Activated B cell treated with CpG ODN at 0.5 μM for 24 hours (primary cell): ENCODE measurements at regions of chr1 and their contacts with region 1.

Region 1: DNA sequence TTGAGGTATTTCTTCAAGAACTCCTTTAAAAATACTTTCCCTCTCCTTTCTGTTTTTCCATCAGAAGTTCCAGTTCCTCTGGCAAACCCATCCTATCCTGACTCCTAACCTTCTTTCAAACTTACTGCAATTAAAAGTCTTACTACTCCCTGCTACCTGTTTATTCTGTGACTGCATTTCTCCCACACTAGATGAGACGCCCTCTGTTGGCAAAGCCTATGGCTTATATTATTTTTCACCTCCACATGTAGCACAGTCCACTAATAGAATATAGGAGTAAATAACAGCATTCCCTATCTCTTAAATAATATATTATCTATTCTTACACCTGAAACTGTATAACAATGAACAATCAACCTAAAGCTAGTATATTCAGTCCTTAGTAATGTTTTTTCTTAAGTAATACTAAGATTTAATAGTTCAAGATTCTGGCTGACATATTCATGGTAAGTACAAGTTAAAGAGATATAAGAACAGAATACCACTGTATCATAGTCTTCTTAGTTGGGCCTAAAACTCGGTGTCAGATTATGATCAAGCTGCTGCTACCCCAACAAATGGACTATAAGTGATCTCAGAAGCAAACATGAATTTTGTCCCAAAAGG is 54.8 kb downstream of the RAB3GAP2 start:
- DNase-seq: no peak
- ATAC-seq: no peak
- H3K4me3 Mint-ChIP-seq: no peak overlapping the region
- H3K27ac Mint-ChIP-seq: peak overlapping the region; percentile 0
- H3K4me1 Mint-ChIP-seq: peaks cover 49% of the 10 kb centered on the region
- H3K27me3 Mint-ChIP-seq: no peaks in the 10 kb centered on the region
- CTCF ChIP-seq: no peak

Region 2: GRCh38 chr1:219990782-219991510 is 226.5 kb before region 1 on chr1:
- CTCF ChIA-PET with region 1: no interaction called
- POLR2A ChIA-PET with region 1: interaction called, 12 read pairs
- intact Hi-C with region 1: no loop called
- DNase-seq: no peak
- ATAC-seq: no peak
- H3K4me3 Mint-ChIP-seq: no peak overlapping the region
- H3K27ac Mint-ChIP-seq: peak overlapping the region; percentile 53
- H3K4me1 Mint-ChIP-seq: peaks cover 49% of the 10 kb centered on the region
- H3K27me3 Mint-ChIP-seq: no peaks in the 10 kb centered on the region
- CTCF ChIP-seq: no peak

Region 3: DNA sequence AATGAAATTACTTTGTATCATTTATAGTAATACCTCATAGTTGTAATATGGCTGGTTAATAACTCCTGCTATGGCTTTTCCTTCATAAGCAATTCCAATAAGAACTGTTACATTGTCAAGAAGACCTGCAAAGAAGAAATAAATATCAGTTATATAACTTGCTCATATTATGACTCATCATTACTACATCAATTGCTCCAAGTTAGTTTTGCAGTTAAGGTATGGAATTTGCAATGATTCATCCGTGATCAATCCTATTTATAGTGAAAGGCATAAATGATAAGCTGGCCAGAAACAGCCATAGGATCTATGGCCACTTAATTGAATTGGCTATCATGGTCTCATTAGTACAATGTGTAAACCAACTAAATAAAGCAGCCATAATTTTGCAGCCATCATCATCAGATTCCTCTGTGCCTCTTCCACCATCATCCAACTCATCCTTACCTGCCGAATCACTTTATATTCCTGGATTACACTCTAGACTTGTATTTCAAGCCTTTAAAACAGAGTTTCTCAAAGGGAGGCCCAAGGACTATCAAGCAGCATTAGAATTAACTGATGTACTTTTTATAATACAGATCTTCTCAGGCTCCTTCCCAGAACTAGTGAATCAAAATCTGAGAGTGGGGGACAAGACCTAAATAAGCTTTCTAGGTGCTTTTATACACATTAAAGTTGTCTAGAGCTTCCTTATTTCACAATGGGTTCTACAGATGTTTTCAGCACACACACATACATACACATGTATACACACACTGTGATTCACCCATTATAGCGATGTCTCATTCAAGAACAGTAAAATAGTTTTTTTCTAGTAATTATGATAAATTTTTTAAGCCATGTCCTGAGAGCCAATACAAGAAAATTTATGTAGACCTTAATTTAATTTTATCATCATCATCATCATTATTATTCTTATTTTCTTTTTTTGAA is 149.9 kb before region 1 on chr1:
- CTCF ChIA-PET with region 1: no interaction called
- POLR2A ChIA-PET with region 1: no interaction called
- intact Hi-C with region 1: no loop called
- DNase-seq: no peak
- ATAC-seq: no peak
- H3K4me3 Mint-ChIP-seq: no peak overlapping the region
- H3K27ac Mint-ChIP-seq: no peak overlapping the region
- H3K4me1 Mint-ChIP-seq: no peaks in the 10 kb centered on the region
- H3K27me3 Mint-ChIP-seq: no peaks in the 10 kb centered on the region
- CTCF ChIP-seq: no peak

Region 4: DNA sequence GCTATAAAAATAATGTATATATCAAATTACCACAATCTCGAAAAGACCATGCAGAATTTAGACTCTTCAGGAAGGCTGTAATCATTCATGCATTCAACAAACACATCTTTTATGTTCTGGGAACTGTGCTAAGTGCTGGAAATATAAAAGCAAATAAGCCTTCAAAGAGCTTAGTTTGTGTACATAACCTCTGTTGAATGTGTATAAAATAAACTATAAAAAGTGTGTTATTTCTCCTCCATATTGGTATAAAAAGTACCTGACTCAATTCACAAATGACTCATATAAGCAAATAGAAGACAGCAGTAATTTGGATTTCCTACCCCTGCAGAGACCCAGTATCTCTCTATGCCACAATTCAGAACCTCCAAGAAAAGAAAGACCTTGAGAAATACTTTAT is 18.0 kb after region 1 on chr1:
- CTCF ChIA-PET with region 1: interaction called, 5 read pairs
- POLR2A ChIA-PET with region 1: interaction called, 9 read pairs
- intact Hi-C with region 1: loop called (anchors 2 kb)
- DNase-seq: no peak
- ATAC-seq: no peak
- H3K4me3 Mint-ChIP-seq: no peak overlapping the region
- H3K27ac Mint-ChIP-seq: no peak overlapping the region
- H3K4me1 Mint-ChIP-seq: peaks cover 20% of the 10 kb centered on the region
- H3K27me3 Mint-ChIP-seq: no peaks in the 10 kb centered on the region
- CTCF ChIP-seq: no peak

Region 5: GRCh38 chr1:220294846-220295301 is 77.4 kb after region 1 on chr1:
- CTCF ChIA-PET with region 1: interaction called, 49 read pairs
- POLR2A ChIA-PET with region 1: no interaction called
- intact Hi-C with region 1: loop called (anchors 1 kb)
- DNase-seq: no peak
- ATAC-seq: no peak
- H3K4me3 Mint-ChIP-seq: no peak overlapping the region
- H3K27ac Mint-ChIP-seq: no peak overlapping the region
- H3K4me1 Mint-ChIP-seq: no peaks in the 10 kb centered on the region
- H3K27me3 Mint-ChIP-seq: peaks cover 13% of the 10 kb centered on the region
- CTCF ChIP-seq: no peak

Region 6: DNA sequence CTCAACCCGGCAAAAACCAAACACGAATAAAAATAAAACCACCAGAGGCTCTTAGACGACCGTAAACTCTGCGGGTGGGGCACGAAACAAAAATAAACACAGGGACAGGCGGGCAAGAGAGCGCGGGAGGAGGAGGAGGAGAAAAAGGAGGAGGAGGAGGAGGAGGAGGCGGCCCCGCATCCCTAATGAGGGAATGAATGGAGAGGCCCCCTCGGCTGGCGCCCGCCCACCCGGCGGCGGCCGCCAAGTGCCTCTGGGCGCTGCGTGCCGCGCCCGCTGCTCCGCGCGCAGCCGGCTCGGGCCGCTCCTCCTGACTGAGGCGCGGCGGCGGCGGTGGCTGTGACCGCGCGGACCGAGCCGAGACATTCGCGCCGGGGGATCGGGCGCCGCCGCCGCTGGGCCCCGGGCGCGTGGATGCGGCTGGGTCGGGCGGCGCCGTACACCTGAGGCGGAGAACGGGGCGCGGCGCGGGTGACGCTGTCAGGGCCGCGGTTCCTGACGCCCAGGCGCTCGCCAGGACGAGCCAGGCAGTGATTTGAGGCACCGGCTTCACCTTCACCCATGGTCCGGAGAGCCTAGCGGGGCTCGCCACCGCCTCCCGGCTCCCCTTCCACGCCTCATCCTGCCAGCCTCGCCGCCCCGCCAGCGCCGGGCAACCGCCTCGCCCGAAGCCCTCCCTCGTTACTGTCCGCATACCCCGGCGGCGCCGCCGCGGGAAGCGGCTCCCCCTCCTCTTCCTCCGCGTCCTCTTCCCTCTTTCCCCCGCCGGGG is 310.6 kb after region 1 on chr1 and contains the start of gene MARK1:
- CTCF ChIA-PET with region 1: no interaction called
- POLR2A ChIA-PET with region 1: interaction called, 3 read pairs
- intact Hi-C with region 1: loop called (anchors 5 kb)
- DNase-seq: peak; percentile 42
- ATAC-seq: peak; percentile 64
- H3K4me3 Mint-ChIP-seq: peak within 1 kb of the TSS; percentile 87
- H3K27ac Mint-ChIP-seq: peak within 1 kb of the TSS; percentile 78
- H3K4me1 Mint-ChIP-seq: peaks cover 21% of the 10 kb centered on the region
- H3K27me3 Mint-ChIP-seq: peaks cover 31% of the 10 kb centered on the region
- CTCF ChIP-seq: no peak
- total RNA-seq, gene MARK1: 3.8 and 5.7 TPM in 2 replicates

Region 7: GRCh38 chr1:220770245-220770918 is 552.9 kb after region 1 on chr1:
- CTCF ChIA-PET with region 1: interaction called, 7 read pairs
- POLR2A ChIA-PET with region 1: no interaction called
- intact Hi-C with region 1: loop called (anchors 1 kb)
- DNase-seq: no peak
- ATAC-seq: peak; percentile 88
- H3K4me3 Mint-ChIP-seq: peak overlapping the region; percentile 82
- H3K27ac Mint-ChIP-seq: peak overlapping the region; percentile 96
- H3K4me1 Mint-ChIP-seq: peaks cover 48% of the 10 kb centered on the region
- H3K27me3 Mint-ChIP-seq: no peaks in the 10 kb centered on the region
- CTCF ChIP-seq: no peak